ENCODE measurements at regions of chr4 and their contacts with region 1.

Region 1: GRCh38 chr4:77075869-77076799 is at the start of gene CCNI:
- DNase-seq: peak; percentile 96
- H3K4me3 ChIP-seq: peak within 1 kb of the TSS; percentile 78 to 95
- H3K27ac ChIP-seq: peak within 1 kb of the TSS; percentile 99 to 100
- H3K4me1 ChIP-seq: peaks cover 0 to 5% of the 10 kb centered on the region in 2 donors
- H3K27me3 ChIP-seq: no peaks in the 10 kb centered on the region
- CTCF ChIP-seq: peak in 1 of 4 experiments; percentile 8
- POLR2A ChIP-seq: peak; percentile 79 to 85
- total RNA-seq, gene CCNI: 137 to 471 (median 239) TPM

Region 2: GRCh38 chr4:76821641-76822040 is 254.5 kb before region 1 on chr4:
- intact Hi-C with region 1: no loop called
- DNase-seq: no peak
- H3K4me3 ChIP-seq: no peak overlapping the region
- H3K27ac ChIP-seq: peak overlapping the region; percentile 32 to 52
- H3K4me1 ChIP-seq: no peaks in the 10 kb centered on the region
- H3K27me3 ChIP-seq: no peaks in the 10 kb centered on the region
- CTCF ChIP-seq: no peak
- POLR2A ChIP-seq: no peak

Region 3: DNA sequence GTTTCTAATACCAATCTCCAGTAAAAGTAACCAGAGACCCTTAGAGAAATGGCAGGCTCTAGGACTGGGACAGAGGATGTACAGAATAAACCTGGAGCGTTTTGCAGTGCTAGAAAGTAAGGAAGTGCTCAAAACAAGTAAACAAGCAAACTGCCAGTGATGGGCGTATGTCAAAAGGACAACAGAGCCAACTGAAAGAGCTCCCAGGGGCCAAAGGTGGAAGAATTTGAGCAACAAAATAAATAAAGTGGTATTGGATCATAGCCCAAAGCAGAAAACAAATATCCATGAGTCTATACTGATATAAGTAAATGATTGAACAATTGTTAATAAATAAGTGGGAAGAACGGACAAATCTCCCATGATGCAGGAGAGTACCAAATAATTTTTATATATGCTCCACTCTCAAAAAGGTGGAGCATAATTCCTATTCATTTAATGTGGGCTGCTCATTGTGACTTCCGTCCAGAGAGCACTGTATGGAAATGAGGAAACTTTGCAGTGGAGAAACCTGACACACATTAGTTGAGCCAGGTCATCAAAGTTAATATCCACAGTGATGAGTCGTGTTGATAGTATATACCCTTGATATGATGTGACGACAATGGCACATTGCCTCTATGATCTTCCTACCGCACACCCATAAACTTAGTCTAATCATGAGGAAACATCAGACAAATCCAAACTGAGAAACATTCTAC is 144.4 kb before region 1 on chr4:
- intact Hi-C with region 1: no loop called
- DNase-seq: no peak
- H3K4me3 ChIP-seq: no peak overlapping the region
- H3K27ac ChIP-seq: no peak overlapping the region
- H3K4me1 ChIP-seq: no peaks in the 10 kb centered on the region
- H3K27me3 ChIP-seq: no peaks in the 10 kb centered on the region
- CTCF ChIP-seq: no peak
- POLR2A ChIP-seq: no peak

Region 4: DNA sequence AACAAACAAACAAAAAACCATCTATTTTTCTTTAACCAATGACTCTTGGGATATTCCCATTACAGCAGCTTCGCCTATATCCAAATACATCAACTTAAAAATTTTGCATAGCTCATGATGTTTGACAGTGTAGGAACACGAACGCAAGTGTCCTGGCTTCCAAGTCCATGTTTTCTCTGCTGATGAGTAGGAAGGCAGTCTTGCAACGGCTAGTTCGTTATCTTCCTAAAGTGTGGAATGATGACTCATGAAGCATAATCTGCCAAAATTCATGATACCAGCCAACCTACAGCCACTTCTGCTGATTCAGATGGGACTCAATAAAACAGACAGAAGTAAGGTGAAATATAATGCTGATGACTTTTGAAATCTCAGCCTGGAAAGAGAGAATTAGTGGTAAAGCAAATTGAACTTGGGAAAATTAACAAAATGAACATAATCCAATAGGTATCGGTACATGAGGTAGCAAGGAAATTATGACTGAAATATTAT is 133.0 kb before region 1 on chr4:
- intact Hi-C with region 1: no loop called
- DNase-seq: no peak
- H3K4me3 ChIP-seq: no peak overlapping the region
- H3K27ac ChIP-seq: no peak overlapping the region
- H3K4me1 ChIP-seq: no peaks in the 10 kb centered on the region
- H3K27me3 ChIP-seq: no peaks in the 10 kb centered on the region
- CTCF ChIP-seq: no peak
- POLR2A ChIP-seq: no peak

Region 5: GRCh38 chr4:77156533-77156911 is 80.4 kb after region 1 on chr4:
- intact Hi-C with region 1: loop called (anchors 2 kb)
- DNase-seq: peak; percentile 94 to 98
- H3K4me3 ChIP-seq: peak overlapping the region; percentile 78 to 91
- H3K27ac ChIP-seq: peak overlapping the region; percentile 91 to 94
- H3K4me1 ChIP-seq: peaks cover 0 to 5% of the 10 kb centered on the region in 2 donors
- H3K27me3 ChIP-seq: no peaks in the 10 kb centered on the region
- CTCF ChIP-seq: no peak
- POLR2A ChIP-seq: peak; percentile 40 to 72

Region 6: GRCh38 chr4:77284036-77284435 is 207.9 kb after region 1 on chr4:
- intact Hi-C with region 1: no loop called
- DNase-seq: no peak
- H3K4me3 ChIP-seq: no peak overlapping the region
- H3K27ac ChIP-seq: no peak overlapping the region
- H3K4me1 ChIP-seq: no peaks in the 10 kb centered on the region
- H3K27me3 ChIP-seq: no peaks in the 10 kb centered on the region
- CTCF ChIP-seq: no peak
- POLR2A ChIP-seq: no peak